ENCODE measurements at regions of chr2 and their contacts with region 1.

Region 1: GRCh38 chr2:169683054-169683424 is 11.2 kb downstream of the CFAP210 start:
- DNase-seq: no peak
- ATAC-seq: no peak

Region 2: DNA sequence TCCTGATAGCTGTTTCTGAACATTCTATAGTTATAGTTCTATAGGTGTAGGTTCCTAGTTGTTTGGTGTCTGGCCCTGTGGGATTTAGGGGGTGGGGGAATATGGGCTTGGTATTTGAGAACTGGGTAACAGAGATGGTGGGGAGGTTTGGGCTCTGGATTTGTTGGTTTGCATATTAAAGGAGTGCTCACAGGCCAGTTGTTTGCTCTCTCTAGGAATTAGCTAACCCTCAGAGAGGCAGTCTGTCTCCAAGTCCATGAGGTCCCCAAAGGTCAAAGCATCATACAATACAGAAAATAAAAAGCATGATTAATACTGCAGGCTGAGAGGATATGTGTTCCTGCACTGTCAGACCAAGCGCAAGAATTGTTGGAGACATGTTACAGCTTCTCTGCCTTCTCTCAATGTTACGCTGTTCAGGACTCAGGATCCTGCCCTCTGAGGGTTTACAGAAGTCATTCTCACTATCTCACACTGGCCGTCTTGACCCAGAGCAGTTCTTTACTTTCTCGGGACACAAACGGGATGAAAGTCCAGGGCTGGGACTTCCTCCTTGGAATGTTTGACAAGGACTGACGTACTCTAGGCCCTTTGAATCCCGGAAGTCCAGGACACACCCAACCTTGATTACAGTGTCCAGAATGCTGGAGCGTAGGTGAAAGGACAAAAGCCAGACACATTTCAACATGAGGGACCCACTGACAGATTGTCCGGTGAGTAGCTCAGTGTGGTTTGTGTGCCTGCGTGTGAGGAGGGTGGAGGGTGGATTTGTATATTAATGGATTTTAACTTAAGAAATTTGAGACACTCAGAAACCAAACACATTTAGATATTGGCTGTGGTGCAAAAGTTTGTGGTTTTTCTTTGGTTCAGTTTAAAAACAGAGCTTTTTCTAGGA is 880.8 kb before region 1 on chr2 and contains the start of gene NOSTRIN:
- intact Hi-C with region 1: no loop called
- DNase-seq: peak; percentile 70 to 89
- ATAC-seq: peak; percentile 90
- total RNA-seq, gene NOSTRIN: 52.7 to 55.6 TPM

Region 3: DNA sequence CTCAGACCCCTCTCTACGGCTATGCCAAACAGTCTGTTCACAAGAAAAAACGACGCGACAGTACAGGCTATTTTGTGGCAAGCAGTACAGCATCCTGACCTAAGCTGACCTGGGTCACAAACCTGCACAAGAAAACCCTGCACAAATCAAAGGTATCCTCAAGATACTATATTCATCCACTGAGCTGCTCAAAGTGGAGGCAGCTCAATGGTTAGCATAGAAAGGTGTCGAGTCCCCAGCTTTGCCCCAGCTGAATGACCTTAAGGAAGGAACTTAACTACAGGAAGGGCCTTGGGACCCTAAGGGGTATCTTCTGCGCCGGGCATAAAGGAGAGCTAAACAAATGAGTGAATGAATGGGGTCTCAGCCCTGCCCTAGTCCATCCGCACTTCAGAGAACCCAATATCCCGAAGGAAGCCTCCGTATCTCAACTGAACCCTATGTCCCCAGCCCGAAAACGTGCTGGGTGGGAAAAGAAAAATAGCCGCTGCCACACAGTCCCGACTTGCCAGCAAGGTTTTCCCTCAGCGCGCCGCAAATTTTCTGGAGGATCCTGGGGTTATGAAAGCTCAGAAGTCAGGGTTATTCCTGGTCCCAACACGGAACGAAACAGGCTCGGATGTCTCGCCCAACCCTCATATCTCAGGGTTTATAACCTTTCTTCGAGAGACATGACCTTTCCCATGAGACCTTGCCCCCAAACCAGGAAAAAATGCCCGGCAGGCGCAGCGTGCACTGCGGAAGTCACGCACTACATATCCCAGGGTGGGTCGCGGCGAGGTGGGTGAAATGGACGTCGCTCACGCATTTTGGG is 109.7 kb before region 1 on chr2 and contains the start of gene FASTKD1:
- intact Hi-C with region 1: loop called in 1 of 2 experiments (anchors 10 kb)
- DNase-seq: peak; percentile 93 to 94
- ATAC-seq: peak; percentile 98
- total RNA-seq, gene FASTKD1: 65.8 to 69.2 TPM